Posterior vena cava (tissue), 2 donors: ENCODE measurements at regions of chr9 and their contacts with region 1.

Region 1: DNA sequence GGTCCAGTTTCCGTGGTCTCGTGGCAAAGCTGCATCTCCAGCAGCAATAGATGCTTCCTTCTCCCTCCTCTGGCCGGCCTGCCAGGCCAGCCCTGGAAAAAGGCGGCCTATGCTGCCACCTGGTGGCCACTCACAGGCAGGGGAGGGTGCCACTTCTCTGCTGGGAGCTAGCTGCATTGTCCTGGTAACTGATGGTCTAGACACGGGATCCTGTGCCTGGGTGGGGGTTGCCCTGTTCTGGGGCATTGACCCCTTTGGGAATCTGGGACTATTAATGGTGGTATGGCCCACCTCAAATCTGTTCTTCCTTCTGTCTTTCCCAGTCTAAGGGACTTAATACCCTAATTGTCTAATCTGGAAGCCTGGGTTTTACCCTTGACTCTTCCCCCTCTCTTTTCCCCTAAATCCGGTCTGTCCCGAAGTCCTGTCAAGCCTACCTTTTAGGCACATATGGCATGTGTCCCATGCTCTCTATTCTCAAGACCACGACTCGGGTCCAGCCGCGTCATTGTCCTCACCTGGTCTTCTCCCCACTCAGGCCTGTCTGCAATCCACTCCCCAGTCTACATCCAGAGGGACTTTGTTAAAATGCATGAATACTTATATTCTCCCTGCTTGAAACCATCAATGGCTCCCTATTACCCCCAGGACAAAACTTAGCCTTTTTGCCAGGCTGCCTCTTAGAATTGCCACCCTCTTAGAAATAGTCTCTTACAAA is 20.0 kb upstream of the PTGS1 start:
- DNase-seq: peak; percentile 94

Region 2: GRCh38 chr9:122099271-122099869 is 251.4 kb before region 1 on chr9:
- intact Hi-C with region 1: loop called in 1 of 2 experiments (anchors 2 kb)
- DNase-seq: peak; percentile 96